Mammary epithelial cell (primary cell): ENCODE measurements at regions of chr1 and their contacts with region 1.

Region 1: GRCh38 chr1:209651148-209651547 is 1.1 kb downstream of the LAMB3 start:
- DNase-seq: peak; percentile 78
- H3K4me3 ChIP-seq: peak overlapping the region; percentile 71 to 91 (median 81)
- H3K27ac ChIP-seq: peak overlapping the region; percentile 100
- H3K4me1 ChIP-seq: peaks cover 52% of the 10 kb centered on the region
- H3K27me3 ChIP-seq: no peaks in the 10 kb centered on the region
- CTCF ChIP-seq: no peak

Region 2: GRCh38 chr1:209411491-209411929 is 239.6 kb before region 1 on chr1:
- CTCF ChIA-PET with region 1: no interaction called
- dilution Hi-C with region 1: no loop called
- in situ Hi-C with region 1: no loop called
- intact Hi-C with region 1: loop called (anchors 5 kb)
- DNase-seq: peak; percentile 97
- H3K4me3 ChIP-seq: peak overlapping the region in 1 of 3 experiments; percentile 12
- H3K27ac ChIP-seq: peak overlapping the region; percentile 100
- H3K4me1 ChIP-seq: peaks cover 78% of the 10 kb centered on the region
- H3K27me3 ChIP-seq: no peaks in the 10 kb centered on the region
- CTCF ChIP-seq: no peak

Region 3: GRCh38 chr1:209601809-209602657 is 49.1 kb before region 1 on chr1:
- CTCF ChIA-PET with region 1: no interaction called
- dilution Hi-C with region 1: no loop called
- in situ Hi-C with region 1: no loop called
- intact Hi-C with region 1: loop called (anchors 1 kb)
- DNase-seq: peak; percentile 61
- H3K4me3 ChIP-seq: no peak overlapping the region
- H3K27ac ChIP-seq: no peak overlapping the region
- H3K4me1 ChIP-seq: peaks cover 1% of the 10 kb centered on the region
- H3K27me3 ChIP-seq: no peaks in the 10 kb centered on the region
- CTCF ChIP-seq: peak; percentile 80 to 93

Region 4: GRCh38 chr1:209747580-209748262 is 96.6 kb after region 1 on chr1:
- CTCF ChIA-PET with region 1: no interaction called
- dilution Hi-C with region 1: no loop called
- in situ Hi-C with region 1: no loop called
- intact Hi-C with region 1: loop called (anchors 1 kb)
- DNase-seq: peak; percentile 97
- H3K4me3 ChIP-seq: no peak overlapping the region
- H3K27ac ChIP-seq: no peak overlapping the region
- H3K4me1 ChIP-seq: peaks cover 7% of the 10 kb centered on the region
- H3K27me3 ChIP-seq: no peaks in the 10 kb centered on the region
- CTCF ChIP-seq: peak; percentile 69 to 74

Region 5: DNA sequence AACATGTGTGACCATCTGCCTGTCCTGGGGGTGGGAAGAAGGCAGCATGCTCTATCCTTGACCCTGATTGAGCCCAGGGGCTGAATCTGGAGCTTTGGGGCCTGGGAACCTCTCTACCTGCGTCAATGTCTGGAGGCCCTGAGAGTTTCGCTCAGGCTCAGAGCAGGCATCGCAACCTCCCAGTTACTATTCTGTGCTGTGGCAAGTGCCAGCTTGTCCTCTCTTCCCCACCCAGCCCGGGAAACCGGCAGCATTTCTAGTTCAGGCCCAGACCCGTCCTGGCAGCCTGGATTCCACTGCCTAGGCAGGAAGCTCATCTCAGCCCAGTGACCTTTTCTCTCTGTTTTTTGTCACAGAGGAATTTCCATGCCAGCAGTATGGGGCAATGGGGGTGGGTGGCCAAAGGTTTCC is 164.8 kb after region 1 on chr1:
- CTCF ChIA-PET with region 1: no interaction called
- dilution Hi-C with region 1: loop called (anchors 5 kb)
- in situ Hi-C with region 1: no loop called
- intact Hi-C with region 1: no loop called
- DNase-seq: peak; percentile 100
- H3K4me3 ChIP-seq: peak overlapping the region in 1 of 3 experiments; percentile 35
- H3K27ac ChIP-seq: peak overlapping the region; percentile 97
- H3K4me1 ChIP-seq: peaks cover 25% of the 10 kb centered on the region
- H3K27me3 ChIP-seq: no peaks in the 10 kb centered on the region
- CTCF ChIP-seq: no peak